ENCODE measurements at regions of chr11 and their contacts with region 1.

Region 1: DNA sequence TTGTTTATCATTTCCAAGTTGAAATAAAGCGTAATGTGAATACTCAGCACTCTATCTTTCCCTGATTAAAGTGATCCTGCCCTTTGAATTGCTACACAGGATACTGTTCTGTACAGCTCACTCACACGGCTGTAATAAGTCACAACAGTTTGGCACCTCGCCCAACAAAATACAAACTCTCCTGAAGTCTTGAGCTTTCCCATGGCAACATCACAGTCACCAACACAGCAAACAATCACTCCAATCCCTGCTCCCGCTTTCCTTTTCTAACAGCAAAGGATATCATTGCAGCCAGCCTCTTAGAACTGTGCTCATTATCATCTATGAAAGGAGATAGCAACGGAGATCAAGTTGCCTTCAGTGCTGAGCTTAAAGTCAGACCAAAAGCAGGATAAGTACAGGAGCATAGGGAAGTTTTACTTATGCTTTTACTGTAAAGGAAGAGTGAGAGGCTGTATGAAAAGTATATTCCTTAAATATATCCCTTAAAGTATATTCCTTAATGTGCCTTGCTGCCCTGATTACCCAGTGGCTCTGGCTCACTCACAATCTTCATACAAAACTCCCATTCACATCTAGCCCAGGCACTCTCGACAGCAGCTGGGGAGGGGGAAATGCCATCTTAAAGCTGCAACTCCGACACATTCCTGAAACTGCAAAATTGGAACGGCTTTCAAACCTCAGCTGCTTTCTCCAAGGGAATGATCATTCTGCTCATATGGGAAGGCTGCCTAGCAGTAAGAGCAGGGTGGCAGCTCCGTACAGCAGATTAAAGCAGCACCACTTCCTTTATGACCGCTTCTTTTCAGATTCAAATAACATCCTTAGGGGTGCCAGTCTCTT is 35.8 kb downstream of the MAML2 start:
- DNase-seq: peak; percentile 99
- H3K4me3 ChIP-seq: peak overlapping the region in 2 of 3 experiments; percentile 8 to 24
- H3K27ac ChIP-seq: peak overlapping the region; percentile 98
- H3K4me1 ChIP-seq: peaks cover 84% of the 10 kb centered on the region
- H3K27me3 ChIP-seq: no peaks in the 10 kb centered on the region
- CTCF ChIP-seq: no peak
- POLR2A ChIP-seq: peak; percentile 52

Region 2: DNA sequence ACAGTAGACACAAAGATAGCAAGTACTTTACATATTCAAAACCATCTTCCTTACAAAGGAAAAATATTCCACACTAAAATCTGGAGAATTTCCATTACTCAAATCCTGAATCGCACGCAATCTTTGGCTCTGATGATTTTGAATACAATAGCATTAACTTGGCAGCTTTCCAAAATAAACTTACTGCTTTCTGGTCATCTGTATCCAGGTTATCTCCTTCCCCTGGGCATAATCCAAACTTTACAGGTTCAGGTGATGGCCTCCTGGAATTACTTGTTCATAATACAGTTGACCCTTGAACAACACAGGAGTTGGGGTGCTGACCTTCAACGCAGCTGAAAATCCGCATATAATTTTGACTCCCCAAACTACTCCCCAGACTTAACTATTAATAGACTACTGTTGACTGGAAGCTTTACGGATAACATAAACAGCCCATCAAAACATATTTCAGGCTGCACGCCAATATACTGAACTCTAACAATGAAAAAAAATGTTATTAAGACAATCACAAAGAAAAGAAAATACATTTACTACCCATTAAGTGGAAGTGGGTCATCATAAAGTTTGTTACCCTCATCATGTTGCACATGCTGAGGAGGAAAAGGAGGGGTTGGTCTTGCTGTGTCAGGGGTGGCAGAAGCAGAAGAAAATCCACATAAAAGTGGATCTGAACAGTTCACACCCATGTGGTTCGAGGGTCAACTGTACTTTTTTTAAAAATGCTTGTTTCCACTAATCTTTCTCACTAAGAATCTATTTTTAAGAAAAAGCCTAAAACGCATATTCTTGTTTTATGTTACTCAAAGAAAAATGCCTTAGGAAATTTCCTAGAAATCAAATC is 389.7 kb before region 1 on chr11:
- CTCF ChIA-PET with region 1: no interaction called
- POLR2A ChIA-PET with region 1: interaction called, 3 read pairs
- dilution Hi-C with region 1: no loop called
- intact Hi-C with region 1: loop called (anchors 1 kb)
- DNase-seq: peak; percentile 97
- H3K4me3 ChIP-seq: peak overlapping the region in 1 of 3 experiments; percentile 17
- H3K27ac ChIP-seq: peak overlapping the region; percentile 77
- H3K4me1 ChIP-seq: peaks cover 54% of the 10 kb centered on the region
- H3K27me3 ChIP-seq: no peaks in the 10 kb centered on the region
- CTCF ChIP-seq: no peak
- POLR2A ChIP-seq: no peak

Region 3: DNA sequence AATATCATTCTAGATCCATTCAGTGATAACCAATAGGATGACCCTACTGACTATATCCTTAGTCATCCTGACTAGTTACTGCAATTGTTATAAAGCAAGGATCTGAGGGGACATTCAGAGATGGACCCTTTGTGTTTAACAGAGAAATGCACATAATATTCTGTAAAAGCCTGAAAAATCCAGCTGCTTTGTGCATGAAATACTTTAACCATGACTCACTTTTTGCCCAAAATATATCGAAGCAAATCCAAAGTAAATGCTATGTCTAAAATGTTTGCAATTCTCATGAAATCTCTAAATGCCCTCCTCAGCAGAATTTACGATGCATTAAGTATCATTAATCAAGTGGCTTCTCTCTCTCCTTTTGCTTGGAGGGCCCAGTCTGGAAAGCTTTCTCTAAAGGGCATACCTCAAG is 204.5 kb before region 1 on chr11:
- CTCF ChIA-PET with region 1: no interaction called
- POLR2A ChIA-PET with region 1: no interaction called
- dilution Hi-C with region 1: no loop called
- intact Hi-C with region 1: loop called (anchors 1 kb)
- DNase-seq: peak; percentile 55
- H3K4me3 ChIP-seq: no peak overlapping the region
- H3K27ac ChIP-seq: peak overlapping the region; percentile 74
- H3K4me1 ChIP-seq: peaks cover 30% of the 10 kb centered on the region
- H3K27me3 ChIP-seq: no peaks in the 10 kb centered on the region
- CTCF ChIP-seq: no peak
- POLR2A ChIP-seq: no peak

Region 4: DNA sequence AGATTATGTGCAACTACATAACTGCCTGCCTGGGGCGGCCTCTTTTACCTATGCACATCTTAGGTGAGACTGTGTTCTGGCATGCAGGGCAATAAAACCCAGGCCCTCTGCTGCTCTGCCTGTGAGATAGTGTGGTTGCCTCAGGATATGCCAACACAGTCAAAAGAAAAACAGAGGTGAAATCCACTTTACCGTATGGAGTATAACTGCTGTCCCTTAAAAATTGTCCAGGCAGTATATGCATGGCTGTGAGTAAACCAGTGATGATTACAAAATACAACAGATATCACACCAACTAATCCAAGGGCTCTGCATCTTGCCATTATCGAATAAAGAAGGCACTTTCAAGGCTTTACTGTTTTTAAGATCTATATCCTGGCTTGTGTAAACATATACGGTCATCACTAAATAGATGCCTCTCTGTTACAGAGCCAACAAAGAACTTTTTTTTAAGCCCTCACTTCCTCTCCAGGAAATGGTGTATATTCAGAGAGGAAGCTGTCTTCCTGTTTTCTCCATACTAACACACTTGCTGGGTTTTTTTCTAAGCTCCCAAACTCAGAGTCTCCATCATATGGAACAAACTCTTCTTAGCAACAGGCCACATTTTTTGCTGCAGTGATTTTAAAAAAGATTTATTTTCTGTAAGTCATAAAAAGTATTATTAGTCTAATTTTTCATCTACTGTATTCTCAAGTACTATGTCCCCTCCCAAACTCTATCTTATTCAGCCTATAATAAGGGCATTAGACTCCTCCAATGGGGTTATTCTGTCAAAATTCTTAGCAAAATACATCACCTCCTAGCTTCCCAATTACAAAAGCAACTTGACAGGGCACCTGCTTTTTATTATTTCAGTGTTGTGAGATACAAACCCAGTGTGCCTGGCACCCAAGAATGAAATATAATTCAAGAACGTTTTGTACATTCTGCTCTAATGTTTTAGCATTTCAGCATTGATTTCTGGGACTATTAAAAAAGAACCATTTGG is 99.4 kb before region 1 on chr11:
- CTCF ChIA-PET with region 1: no interaction called
- POLR2A ChIA-PET with region 1: interaction called, 3 read pairs
- dilution Hi-C with region 1: no loop called
- intact Hi-C with region 1: loop called (anchors 1 kb)
- DNase-seq: peak; percentile 89
- H3K4me3 ChIP-seq: peak overlapping the region in 1 of 3 experiments; percentile 42
- H3K27ac ChIP-seq: peak overlapping the region; percentile 94
- H3K4me1 ChIP-seq: peaks cover 48% of the 10 kb centered on the region
- H3K27me3 ChIP-seq: no peaks in the 10 kb centered on the region
- CTCF ChIP-seq: no peak
- POLR2A ChIP-seq: peak; percentile 72

Region 5: DNA sequence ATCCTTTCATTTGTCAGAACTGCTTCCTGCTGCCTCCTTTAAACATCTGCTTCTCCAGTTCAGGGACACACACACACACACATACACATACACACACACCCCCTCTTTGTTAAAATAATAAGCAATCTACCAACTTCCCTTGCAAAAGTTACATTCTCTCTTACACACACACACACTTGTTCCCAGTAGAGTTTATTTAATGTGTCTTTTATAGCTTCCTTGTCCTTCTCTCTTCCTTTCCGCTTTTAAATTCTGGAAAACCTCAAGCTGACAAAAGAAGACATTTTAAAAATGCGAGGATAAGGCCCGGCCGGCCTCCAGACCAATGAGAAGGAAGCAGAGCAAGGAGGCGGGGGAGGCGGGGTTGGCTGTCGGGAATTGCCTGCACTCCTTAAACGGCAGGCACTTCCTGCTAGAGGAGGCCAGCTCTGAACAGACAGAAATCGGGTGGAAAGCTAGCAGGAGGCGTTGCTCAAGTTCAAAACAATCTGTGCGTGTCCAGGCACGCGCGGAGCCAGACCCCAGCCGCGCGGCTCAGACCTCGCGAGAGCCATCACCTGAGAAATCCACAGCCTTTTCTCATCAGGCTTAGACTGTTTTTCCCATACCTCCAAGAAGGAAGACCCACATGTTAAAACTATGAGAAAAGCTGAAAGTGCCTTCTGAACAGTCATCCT is 64.0 kb before region 1 on chr11:
- CTCF ChIA-PET with region 1: interaction called, 5 read pairs
- POLR2A ChIA-PET with region 1: no interaction called
- dilution Hi-C with region 1: no loop called
- intact Hi-C with region 1: loop called (anchors 1 kb)
- DNase-seq: peak; percentile 97
- H3K4me3 ChIP-seq: peak overlapping the region in 2 of 3 experiments; percentile 42 to 58
- H3K27ac ChIP-seq: peak overlapping the region; percentile 74
- H3K4me1 ChIP-seq: peaks cover 19% of the 10 kb centered on the region
- H3K27me3 ChIP-seq: no peaks in the 10 kb centered on the region
- CTCF ChIP-seq: no peak
- POLR2A ChIP-seq: peak; percentile 46